ENCODE measurements at regions of chrX and their contacts with region 1.

Region 1: DNA sequence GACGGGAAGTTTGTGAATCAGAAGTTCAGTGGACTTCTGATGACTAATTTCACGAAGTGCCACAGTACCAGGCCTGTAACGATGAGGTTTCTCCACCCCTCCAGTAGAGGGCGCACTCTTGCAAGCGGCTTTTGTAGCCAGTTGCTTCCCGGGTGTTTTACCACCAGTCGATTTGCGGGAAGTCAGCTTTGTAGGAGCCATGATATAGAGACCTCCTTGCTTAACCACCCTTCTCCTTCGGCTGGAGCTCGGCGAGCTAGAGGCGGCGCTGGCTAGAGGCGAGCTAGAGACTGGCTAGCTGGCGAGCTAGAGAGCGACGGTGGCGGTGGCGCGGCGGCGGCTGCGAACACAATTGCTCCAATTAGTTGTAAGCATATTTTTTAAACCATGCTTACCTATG is 72.0 kb downstream of the IL1RAPL1 start:
- DNase-seq: no peak
- H3K4me3 ChIP-seq: no peak overlapping the region
- H3K27ac ChIP-seq: no peak overlapping the region
- H3K4me1 ChIP-seq: no peaks in the 10 kb centered on the region
- H3K27me3 ChIP-seq: no peaks in the 10 kb centered on the region
- CTCF ChIP-seq: peak in 1 of 5 experiments; percentile 8
- EP300 ChIP-seq: no peak
- POLR2A ChIP-seq: no peak

Region 2: DNA sequence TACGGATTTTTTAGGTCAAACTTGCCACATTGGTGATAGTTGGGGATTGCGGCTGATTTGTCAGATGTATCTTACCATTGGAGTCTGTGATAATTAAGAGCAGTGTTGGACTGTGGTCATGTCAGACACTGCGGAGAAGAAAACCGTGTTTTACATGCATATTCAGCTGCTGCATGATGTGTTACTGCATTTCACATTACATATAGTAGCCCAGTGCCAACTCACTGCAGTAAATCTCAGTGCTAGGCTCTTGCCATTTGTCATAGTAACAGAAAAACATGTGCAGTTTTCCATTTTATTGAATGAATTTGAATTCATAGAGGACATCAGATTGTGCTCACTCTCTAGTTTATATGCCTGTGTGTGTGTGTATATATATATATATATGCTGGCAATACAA is 471.6 kb after region 1 on chrX:
- in situ Hi-C with region 1: no loop called
- intact Hi-C with region 1: no loop called
- DNase-seq: no peak
- H3K4me3 ChIP-seq: no peak overlapping the region
- H3K27ac ChIP-seq: no peak overlapping the region
- H3K4me1 ChIP-seq: no peaks in the 10 kb centered on the region
- H3K27me3 ChIP-seq: no peaks in the 10 kb centered on the region
- CTCF ChIP-seq: no peak
- EP300 ChIP-seq: no peak
- POLR2A ChIP-seq: no peak

Region 3: DNA sequence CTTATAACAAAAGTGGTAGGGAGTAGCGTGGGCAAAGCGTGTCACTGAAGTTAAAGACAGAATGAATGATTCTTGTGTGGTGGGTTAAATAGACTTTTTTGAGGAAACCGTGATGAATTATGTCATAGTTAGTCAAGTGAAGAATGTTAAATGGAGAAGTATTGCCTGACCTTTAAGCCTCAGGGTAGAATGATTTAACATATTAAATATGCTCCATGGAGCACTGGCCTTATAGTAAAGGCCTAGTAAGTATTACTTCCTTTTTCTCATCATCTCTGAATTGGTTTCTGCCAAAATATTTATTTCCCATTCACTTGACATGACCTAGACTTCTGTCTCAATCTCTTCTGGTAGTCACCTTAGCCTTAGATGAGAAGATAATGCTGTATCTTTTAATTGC is 1611.4 kb after region 1 on chrX:
- in situ Hi-C with region 1: no loop called
- intact Hi-C with region 1: loop called (anchors 5 kb)
- DNase-seq: no peak
- H3K4me3 ChIP-seq: no peak overlapping the region
- H3K27ac ChIP-seq: no peak overlapping the region
- H3K4me1 ChIP-seq: no peaks in the 10 kb centered on the region
- H3K27me3 ChIP-seq: no peaks in the 10 kb centered on the region
- CTCF ChIP-seq: no peak
- EP300 ChIP-seq: no peak
- POLR2A ChIP-seq: no peak

Measured in transverse colon (tissue), 4 donors.